CD4-positive, alpha-beta memory T cell (primary cell): ENCODE measurements at regions of chr3 and their contacts with region 1.

Region 1: GRCh38 chr3:141402476-141403171 is 34.3 kb downstream of the ZBTB38 start:
- DNase-seq: peak; percentile 47 to 64 (median 52)
- H3K4me3 ChIP-seq: peak overlapping the region; percentile 55 to 79
- H3K4me3 Mint-ChIP-seq: peak overlapping the region; percentile 89 to 96 (median 95)
- H3K27ac ChIP-seq: peak overlapping the region; percentile 85
- H3K27ac Mint-ChIP-seq: peak overlapping the region; percentile 90 to 97 (median 95)
- H3K4me1 ChIP-seq: peaks cover 73% of the 10 kb centered on the region
- H3K4me1 Mint-ChIP-seq: peaks cover 46 to 75% (median 60%) of the 10 kb centered on the region in 4 donors
- H3K27me3 ChIP-seq: no peaks in the 10 kb centered on the region
- H3K27me3 Mint-ChIP-seq: no peaks in the 10 kb centered on the region

Region 2: DNA sequence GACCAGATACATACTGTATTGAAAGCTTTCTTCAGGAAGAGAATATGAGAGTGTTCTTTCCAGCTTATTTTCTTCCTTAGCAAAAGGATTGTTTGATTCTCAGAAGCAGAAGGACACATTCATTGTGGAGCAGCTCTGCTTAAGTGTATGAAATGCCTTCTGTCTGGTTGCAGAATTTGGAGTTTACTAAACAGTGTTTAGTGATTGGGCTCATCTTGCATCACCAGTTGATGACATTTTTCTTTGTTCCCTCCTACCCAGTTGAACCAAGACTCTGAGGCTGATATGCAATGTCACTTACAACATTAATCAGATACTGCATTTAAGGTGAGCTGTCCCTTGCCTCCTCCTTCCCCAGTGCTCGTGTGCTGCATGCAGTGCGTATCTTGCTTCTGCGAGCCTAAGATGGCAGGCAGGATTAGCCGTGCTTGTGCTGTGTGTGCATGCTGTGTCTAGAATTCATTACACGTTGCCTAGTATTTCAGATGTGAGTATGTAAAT is 16.0 kb before region 1 on chr3:
- CTCF ChIA-PET with region 1: interaction called, 7 read pairs
- POLR2A ChIA-PET with region 1: interaction called, 196 read pairs
- intact Hi-C with region 1: loop called (anchors 1 kb)
- DNase-seq: no peak
- H3K4me3 ChIP-seq: peak overlapping the region in 1 of 2 donors; percentile 17
- H3K4me3 Mint-ChIP-seq: peak overlapping the region; percentile 85 to 91 (median 88)
- H3K27ac ChIP-seq: peak overlapping the region; percentile 33
- H3K27ac Mint-ChIP-seq: peak overlapping the region; percentile 45 to 89 (median 86)
- H3K4me1 ChIP-seq: peaks cover 15% of the 10 kb centered on the region
- H3K4me1 Mint-ChIP-seq: peaks cover 17 to 23% (median 20%) of the 10 kb centered on the region in 4 donors
- H3K27me3 ChIP-seq: no peaks in the 10 kb centered on the region
- H3K27me3 Mint-ChIP-seq: no peaks in the 10 kb centered on the region